ENCODE measurements at regions of chr1 and their contacts with region 1.

Region 1: GRCh38 chr1:228139944-228140656 is at the start of gene GUK1:
- DNase-seq: peak; percentile 100
- ATAC-seq: peak; percentile 96
- H3K4me3 ChIP-seq: peak within 1 kb of the TSS; percentile 98
- H3K27ac ChIP-seq: peak within 1 kb of the TSS; percentile 79
- H3K4me1 ChIP-seq: peaks cover 0 to 17% of the 10 kb centered on the region in 2 experiments; a peak in 3 of 4 replicates
- H3K27me3 ChIP-seq: peaks cover 3% of the 10 kb centered on the region; the same call in 1 of the 2 replicates
- CTCF ChIP-seq: no peak
- POLR2A ChIP-seq: peak; percentile 54
- RAD21 ChIP-seq: no peak
- total RNA-seq, gene GUK1: 145 TPM

Region 2: DNA sequence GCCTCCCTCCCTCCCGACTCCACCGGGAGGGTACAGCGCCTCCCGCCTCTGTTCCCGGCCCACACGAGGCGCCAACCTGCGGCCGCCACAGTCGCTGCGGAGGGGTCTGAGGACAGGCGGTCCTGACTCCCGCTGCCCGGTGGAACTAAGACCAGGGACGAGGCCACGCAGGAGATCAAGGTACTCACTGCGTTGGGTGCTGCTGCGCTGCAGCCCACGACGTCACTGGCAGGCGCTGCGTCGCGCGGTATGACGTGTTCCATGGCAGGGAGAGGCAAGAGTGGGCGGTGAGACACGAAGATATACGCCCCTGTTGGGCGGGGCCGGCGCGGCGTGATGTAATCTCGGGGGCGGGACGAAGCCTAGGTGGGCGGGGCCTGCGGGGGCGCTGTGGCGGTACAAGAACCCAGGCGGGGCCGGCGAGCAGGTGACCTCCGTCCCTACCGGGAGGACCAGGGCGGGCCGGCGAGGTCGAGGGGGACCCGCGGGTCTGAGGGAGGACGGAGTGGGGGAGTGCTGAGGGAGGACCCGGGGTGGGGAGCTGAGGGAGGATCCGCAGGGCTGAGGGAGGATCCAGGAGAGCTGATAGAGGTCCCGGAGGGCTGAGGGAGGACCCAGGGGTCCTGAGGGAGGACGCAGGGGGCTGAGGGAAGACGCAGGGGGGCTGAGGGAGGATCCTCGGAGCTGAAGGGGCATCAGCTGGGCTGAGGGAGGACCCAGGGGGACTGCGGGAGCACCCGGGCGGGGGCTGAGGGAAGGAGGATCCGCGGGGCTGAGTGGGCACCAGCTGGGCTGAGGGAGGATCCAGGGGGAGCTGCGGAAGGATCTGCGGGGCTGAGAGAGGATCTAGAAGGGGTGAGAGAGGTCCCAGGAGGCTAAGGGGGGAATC is 30.8 kb before region 1 on chr1 and contains the start of gene MRPL55:
- CTCF ChIA-PET with region 1: no interaction called
- POLR2A ChIA-PET with region 1: no interaction called
- RAD21 ChIA-PET with region 1: no interaction called
- intact Hi-C with region 1: loop called (anchors 2 kb)
- DNase-seq: peak; percentile 91
- ATAC-seq: peak; percentile 91
- H3K4me3 ChIP-seq: peak within 1 kb of the TSS; percentile 97 to 98
- H3K27ac ChIP-seq: peak within 1 kb of the TSS; percentile 57
- H3K4me1 ChIP-seq: peaks cover 4 to 14% of the 10 kb centered on the region in 2 experiments; a peak in 3 of 4 replicates
- H3K27me3 ChIP-seq: no peaks in the 10 kb centered on the region
- CTCF ChIP-seq: no peak
- POLR2A ChIP-seq: peak; percentile 72
- RAD21 ChIP-seq: no peak
- total RNA-seq, gene MRPL55: 57.1 TPM

Region 3: GRCh38 chr1:228212966-228213844 is 73.1 kb after region 1 on chr1:
- CTCF ChIA-PET with region 1: no interaction called
- POLR2A ChIA-PET with region 1: no interaction called
- RAD21 ChIA-PET with region 1: no interaction called
- intact Hi-C with region 1: no loop called
- DNase-seq: peak; percentile 65
- ATAC-seq: peak; percentile 87
- H3K4me3 ChIP-seq: peak overlapping the region; percentile 48 to 57
- H3K27ac ChIP-seq: peak overlapping the region; percentile 54; the same call in 1 of the 2 replicates
- H3K4me1 ChIP-seq: peaks cover 20 to 35% of the 10 kb centered on the region in 2 experiments
- H3K27me3 ChIP-seq: no peaks in the 10 kb centered on the region
- CTCF ChIP-seq: peak in 2 of 3 experiments; percentile 45 to 58; a peak in 5 of 6 replicates
- POLR2A ChIP-seq: no peak
- RAD21 ChIP-seq: no peak; the same call in 1 of the 2 replicates

Region 4: DNA sequence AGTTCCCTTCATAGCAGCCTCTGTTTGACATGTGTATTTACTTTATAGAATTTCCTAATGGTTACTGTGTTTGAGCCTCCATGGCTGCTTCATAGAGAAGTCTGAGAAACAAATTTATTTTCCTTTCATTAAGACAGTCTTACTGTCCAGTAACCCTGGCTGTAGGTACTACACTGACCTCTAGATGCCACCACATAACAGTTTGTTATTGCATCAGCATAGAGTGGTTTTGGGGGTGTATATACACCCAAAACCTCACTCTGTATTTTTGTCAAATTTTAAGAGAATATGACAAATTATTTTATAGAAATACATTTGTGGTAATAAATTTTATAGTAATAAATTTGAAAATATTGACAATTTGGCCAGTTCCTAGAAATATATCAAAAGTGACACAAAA is 125.1 kb after region 1 on chr1:
- CTCF ChIA-PET with region 1: no interaction called
- POLR2A ChIA-PET with region 1: no interaction called
- RAD21 ChIA-PET with region 1: no interaction called
- intact Hi-C with region 1: no loop called
- DNase-seq: no peak
- ATAC-seq: peak; percentile 78
- H3K4me3 ChIP-seq: no peak overlapping the region
- H3K27ac ChIP-seq: no peak overlapping the region
- H3K4me1 ChIP-seq: peaks cover 0 to 3% of the 10 kb centered on the region in 2 experiments; a peak in 1 of 4 replicates
- H3K27me3 ChIP-seq: no peaks in the 10 kb centered on the region
- CTCF ChIP-seq: peak; percentile 20 to 35 (median 27); a peak in 3 of 6 replicates
- POLR2A ChIP-seq: no peak
- RAD21 ChIP-seq: peak; percentile 57